Activated CD4-positive, alpha-beta T cell treated with anti-CD3 and anti-CD28 coated beads for 36 hours (primary cell): ENCODE measurements at regions of chr2 and their contacts with region 1.

Region 1: DNA sequence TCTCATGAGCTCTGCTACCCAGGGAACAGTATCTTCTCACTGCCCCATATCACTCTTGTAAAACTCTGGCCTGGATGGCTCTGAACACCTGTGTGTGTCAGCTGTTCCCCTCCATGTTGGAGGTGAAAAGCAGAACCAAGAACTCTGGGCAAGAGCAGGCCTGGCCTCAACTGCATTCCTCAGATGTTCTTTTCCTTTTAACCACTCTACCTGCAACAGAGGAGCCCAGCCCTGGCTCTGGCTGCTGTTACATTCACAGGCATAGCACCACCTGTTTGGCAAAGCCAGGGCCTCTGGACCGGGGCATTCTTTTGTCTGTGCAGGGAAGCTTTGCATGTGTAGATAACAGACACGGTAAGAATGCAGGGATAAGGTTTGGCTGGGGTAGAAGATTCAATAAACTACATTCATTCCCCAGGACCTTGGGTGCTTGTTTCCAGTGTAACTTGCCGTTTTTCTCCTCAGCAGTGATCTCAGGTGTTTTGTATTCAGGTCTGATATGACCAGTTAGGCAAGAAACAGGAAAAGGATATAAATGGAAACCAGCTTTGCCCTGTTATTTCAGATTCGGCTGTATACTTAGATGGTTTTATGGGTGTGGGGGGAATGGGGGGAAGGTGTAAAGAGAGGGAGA is 95.1 kb downstream of the SPTBN1 start:
- DNase-seq: no peak
- ATAC-seq: no peak
- H3K4me3 Mint-ChIP-seq: no peak overlapping the region
- H3K27ac Mint-ChIP-seq: no peak overlapping the region
- H3K4me1 Mint-ChIP-seq: peaks cover 27% of the 10 kb centered on the region
- H3K27me3 Mint-ChIP-seq: no peaks in the 10 kb centered on the region

Region 2: GRCh38 chr2:54528311-54528945 is 22.8 kb before region 1 on chr2:
- CTCF ChIA-PET with region 1: interaction called, 4 read pairs
- POLR2A ChIA-PET with region 1: no interaction called
- intact Hi-C with region 1: loop called in 1 of 2 experiments (anchors 2 kb)
- DNase-seq: no peak
- ATAC-seq: no peak
- H3K4me3 Mint-ChIP-seq: no peak overlapping the region
- H3K27ac Mint-ChIP-seq: no peak overlapping the region
- H3K4me1 Mint-ChIP-seq: peaks cover 11% of the 10 kb centered on the region
- H3K27me3 Mint-ChIP-seq: no peaks in the 10 kb centered on the region